T-cell (primary cell): ENCODE measurements at regions of chrX and their contacts with region 1.

Region 1: GRCh38 chrX:38805432-38806389 is 4.5 kb downstream of the MID1IP1 start:
- DNase-seq: peak in 30 of 35 experiments; percentile 27 to 80 (median 47)
- ATAC-seq: peak; percentile 56 to 66 (median 60)
- H3K4me3 ChIP-seq: peak overlapping the region; percentile 85 to 86
- H3K4me3 Mint-ChIP-seq: peak overlapping the region; percentile 78 to 87 (median 82)
- H3K27ac ChIP-seq: peak overlapping the region; percentile 85
- H3K27ac Mint-ChIP-seq: peak overlapping the region; percentile 95 to 99
- H3K4me1 ChIP-seq: peaks cover 15 to 39% of the 10 kb centered on the region in 2 experiments
- H3K4me1 Mint-ChIP-seq: peaks cover 39 to 51% (median 44%) of the 10 kb centered on the region in 3 donors
- H3K27me3 ChIP-seq: no peaks in the 10 kb centered on the region
- H3K27me3 Mint-ChIP-seq: peaks cover 0 to 3% of the 10 kb centered on the region in 2 donors

Region 2: DNA sequence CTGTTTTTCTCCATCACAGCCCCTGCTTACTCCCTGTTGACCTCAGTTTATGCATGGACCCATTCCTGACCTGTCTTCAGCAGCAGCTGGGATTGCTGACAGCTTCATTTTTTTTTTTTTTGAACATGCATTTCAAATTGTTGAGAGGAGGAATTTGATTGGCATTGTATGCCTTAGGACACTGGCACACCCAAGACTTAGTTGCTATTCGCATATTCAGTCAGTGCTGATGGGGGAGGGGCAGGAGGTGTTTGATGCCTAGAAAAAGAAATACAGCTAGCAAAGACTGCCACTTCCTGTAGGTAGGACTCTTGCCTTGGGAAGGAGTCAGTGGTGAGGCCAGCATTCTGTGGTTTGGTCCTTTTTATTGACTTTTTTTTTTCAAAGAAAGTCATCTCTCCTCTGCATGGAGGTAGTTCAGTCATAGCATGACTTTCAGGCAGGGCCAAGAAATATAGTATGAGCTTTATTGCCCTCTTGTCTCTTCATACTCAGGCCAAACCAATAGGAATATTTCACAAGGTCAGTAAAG is 1153.7 kb before region 1 on chrX:
- CTCF ChIA-PET with region 1: no interaction called
- POLR2A ChIA-PET with region 1: no interaction called
- DNase-seq: no peak
- ATAC-seq: no peak
- H3K4me3 ChIP-seq: no peak overlapping the region
- H3K4me3 Mint-ChIP-seq: no peak overlapping the region
- H3K27ac ChIP-seq: no peak overlapping the region
- H3K27ac Mint-ChIP-seq: no peak overlapping the region
- H3K4me1 ChIP-seq: peaks cover 0 to 2% of the 10 kb centered on the region in 2 experiments
- H3K4me1 Mint-ChIP-seq: no peaks in the 10 kb centered on the region
- H3K27me3 ChIP-seq: no peaks in the 10 kb centered on the region
- H3K27me3 Mint-ChIP-seq: peaks cover 0 to 16% of the 10 kb centered on the region in 2 donors

Region 3: GRCh38 chrX:38612281-38612680 is 193.4 kb before region 1 on chrX:
- CTCF ChIA-PET with region 1: no interaction called
- POLR2A ChIA-PET with region 1: no interaction called
- DNase-seq: no peak
- ATAC-seq: no peak
- H3K4me3 ChIP-seq: no peak overlapping the region
- H3K4me3 Mint-ChIP-seq: no peak overlapping the region
- H3K27ac ChIP-seq: no peak overlapping the region
- H3K27ac Mint-ChIP-seq: no peak overlapping the region
- H3K4me1 ChIP-seq: no peaks in the 10 kb centered on the region
- H3K4me1 Mint-ChIP-seq: no peaks in the 10 kb centered on the region
- H3K27me3 ChIP-seq: no peaks in the 10 kb centered on the region
- H3K27me3 Mint-ChIP-seq: peaks cover 2 to 28% of the 10 kb centered on the region in 2 donors

Region 4: GRCh38 chrX:38627683-38628082 is 178.0 kb before region 1 on chrX:
- CTCF ChIA-PET with region 1: no interaction called
- POLR2A ChIA-PET with region 1: no interaction called
- DNase-seq: peak in 9 of 35 experiments; percentile 0 to 26 (median 1)
- ATAC-seq: peak in 2 of 4 experiments; percentile 50 to 52
- H3K4me3 ChIP-seq: no peak overlapping the region
- H3K4me3 Mint-ChIP-seq: no peak overlapping the region
- H3K27ac ChIP-seq: no peak overlapping the region
- H3K27ac Mint-ChIP-seq: no peak overlapping the region
- H3K4me1 ChIP-seq: no peaks in the 10 kb centered on the region
- H3K4me1 Mint-ChIP-seq: peaks cover 4 to 7% (median 6%) of the 10 kb centered on the region in 3 donors
- H3K27me3 ChIP-seq: no peaks in the 10 kb centered on the region
- H3K27me3 Mint-ChIP-seq: peaks cover 6 to 19% of the 10 kb centered on the region in 2 donors

Region 5: GRCh38 chrX:38817004-38817703 is 11.4 kb after region 1 on chrX:
- CTCF ChIA-PET with region 1: interaction called in 1 of 2 experiments, 5 read pairs
- POLR2A ChIA-PET with region 1: interaction called in 1 of 2 experiments, 10 read pairs
- DNase-seq: peak in 4 of 35 experiments; percentile 3 to 41 (median 18)
- ATAC-seq: peak; percentile 54 to 87 (median 77)
- H3K4me3 ChIP-seq: no peak overlapping the region
- H3K4me3 Mint-ChIP-seq: no peak overlapping the region
- H3K27ac ChIP-seq: peak overlapping the region; percentile 68
- H3K27ac Mint-ChIP-seq: no peak overlapping the region
- H3K4me1 ChIP-seq: peaks cover 26 to 31% of the 10 kb centered on the region in 2 experiments
- H3K4me1 Mint-ChIP-seq: peaks cover 11 to 27% (median 15%) of the 10 kb centered on the region in 3 donors
- H3K27me3 ChIP-seq: no peaks in the 10 kb centered on the region
- H3K27me3 Mint-ChIP-seq: peaks cover 0 to 6% of the 10 kb centered on the region in 2 donors